ENCODE measurements at regions of chr9 and their contacts with region 1.

Region 1: GRCh38 chr9:114033397-114034103 is 44.5 kb downstream of the AMBP start:
- DNase-seq: no peak
- ATAC-seq: peak; percentile 31
- H3K4me3 ChIP-seq: no peak overlapping the region
- H3K27ac ChIP-seq: no peak overlapping the region
- H3K4me1 ChIP-seq: no peaks in the 10 kb centered on the region
- H3K27me3 ChIP-seq: no peaks in the 10 kb centered on the region

Region 2: GRCh38 chr9:113737517-113738271 is 295.9 kb before region 1 on chr9:
- intact Hi-C with region 1: loop called in 1 of 2 experiments (anchors 5 kb)
- DNase-seq: no peak
- ATAC-seq: peak; percentile 56
- H3K4me3 ChIP-seq: no peak overlapping the region
- H3K27ac ChIP-seq: no peak overlapping the region
- H3K4me1 ChIP-seq: no peaks in the 10 kb centered on the region
- H3K27me3 ChIP-seq: no peaks in the 10 kb centered on the region

Region 3: DNA sequence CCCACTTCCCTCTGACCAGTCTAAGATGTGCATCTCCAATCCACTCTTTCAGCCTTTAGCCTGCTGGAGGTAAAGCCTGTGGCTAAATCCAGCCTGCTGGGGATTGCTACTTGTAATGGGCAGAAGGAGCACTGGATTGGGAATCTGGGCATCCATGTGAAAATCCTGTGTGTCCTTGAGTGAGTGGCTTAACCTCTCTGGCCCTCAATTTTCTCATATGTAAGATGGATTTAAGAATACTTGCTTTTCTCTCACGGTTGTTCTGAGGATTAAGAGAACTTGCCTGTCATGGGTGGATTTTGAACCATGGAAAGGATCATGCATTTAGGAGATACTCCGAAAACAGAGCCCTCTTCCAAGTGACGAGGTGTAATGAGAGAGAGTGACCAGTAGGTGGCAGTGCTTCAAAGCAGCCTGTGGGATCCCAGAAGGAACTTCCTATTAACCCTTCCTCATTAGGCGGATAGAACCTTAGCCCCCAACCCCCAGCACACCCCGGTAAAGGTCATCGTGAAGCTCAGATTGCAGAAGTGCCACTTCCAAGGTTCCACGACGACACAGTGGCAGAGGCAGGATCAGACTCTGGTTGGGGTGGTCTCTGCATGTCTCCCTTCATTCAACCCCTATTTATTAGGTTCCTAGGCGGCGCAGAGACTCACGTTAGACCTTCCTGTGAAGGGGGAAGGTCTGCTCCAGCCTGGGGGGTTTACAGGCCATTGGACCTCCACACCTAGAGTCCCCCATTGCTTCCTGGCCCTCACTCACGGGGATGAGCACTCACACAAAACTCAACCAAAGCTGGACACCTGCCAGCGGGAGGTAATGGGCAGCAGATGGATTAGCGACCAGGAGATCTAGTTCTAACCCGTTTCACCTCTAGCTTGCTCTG is 226.1 kb before region 1 on chr9:
- intact Hi-C with region 1: loop called (anchors 2 to 5 kb)
- DNase-seq: peak in 1 of 2 donors; percentile 62
- ATAC-seq: peak; percentile 89
- H3K4me3 ChIP-seq: no peak overlapping the region
- H3K27ac ChIP-seq: peak overlapping the region in 1 of 2 donors; percentile 14
- H3K4me1 ChIP-seq: no peaks in the 10 kb centered on the region
- H3K27me3 ChIP-seq: no peaks in the 10 kb centered on the region